Activated CD4-positive, alpha-beta T cell treated with anti-CD3 and anti-CD28 coated beads for 36 hours (primary cell): ENCODE measurements at regions of chr12 and their contacts with region 1.

Region 1: GRCh38 chr12:12376646-12377448 is 20.0 kb downstream of the BORCS5 start:
- DNase-seq: peak; percentile 27
- ATAC-seq: peak; percentile 75
- H3K4me3 Mint-ChIP-seq: no peak overlapping the region
- H3K27ac Mint-ChIP-seq: peak overlapping the region; percentile 45
- H3K4me1 Mint-ChIP-seq: peaks cover 37% of the 10 kb centered on the region
- H3K27me3 Mint-ChIP-seq: no peaks in the 10 kb centered on the region

Region 2: GRCh38 chr12:12356886-12357718 is 19.7 kb before region 1 on chr12 and contains the start of gene BORCS5:
- CTCF ChIA-PET with region 1: interaction called, 39 read pairs
- POLR2A ChIA-PET with region 1: interaction called, 6 read pairs
- intact Hi-C with region 1: no loop called
- DNase-seq: peak; percentile 99
- ATAC-seq: peak; percentile 94
- H3K4me3 Mint-ChIP-seq: peak within 1 kb of the TSS; percentile 98
- H3K27ac Mint-ChIP-seq: peak within 1 kb of the TSS; percentile 99
- H3K4me1 Mint-ChIP-seq: peaks cover 38% of the 10 kb centered on the region
- H3K27me3 Mint-ChIP-seq: no peaks in the 10 kb centered on the region
- total RNA-seq, gene BORCS5: 41.8 to 45.0 TPM

Region 3: DNA sequence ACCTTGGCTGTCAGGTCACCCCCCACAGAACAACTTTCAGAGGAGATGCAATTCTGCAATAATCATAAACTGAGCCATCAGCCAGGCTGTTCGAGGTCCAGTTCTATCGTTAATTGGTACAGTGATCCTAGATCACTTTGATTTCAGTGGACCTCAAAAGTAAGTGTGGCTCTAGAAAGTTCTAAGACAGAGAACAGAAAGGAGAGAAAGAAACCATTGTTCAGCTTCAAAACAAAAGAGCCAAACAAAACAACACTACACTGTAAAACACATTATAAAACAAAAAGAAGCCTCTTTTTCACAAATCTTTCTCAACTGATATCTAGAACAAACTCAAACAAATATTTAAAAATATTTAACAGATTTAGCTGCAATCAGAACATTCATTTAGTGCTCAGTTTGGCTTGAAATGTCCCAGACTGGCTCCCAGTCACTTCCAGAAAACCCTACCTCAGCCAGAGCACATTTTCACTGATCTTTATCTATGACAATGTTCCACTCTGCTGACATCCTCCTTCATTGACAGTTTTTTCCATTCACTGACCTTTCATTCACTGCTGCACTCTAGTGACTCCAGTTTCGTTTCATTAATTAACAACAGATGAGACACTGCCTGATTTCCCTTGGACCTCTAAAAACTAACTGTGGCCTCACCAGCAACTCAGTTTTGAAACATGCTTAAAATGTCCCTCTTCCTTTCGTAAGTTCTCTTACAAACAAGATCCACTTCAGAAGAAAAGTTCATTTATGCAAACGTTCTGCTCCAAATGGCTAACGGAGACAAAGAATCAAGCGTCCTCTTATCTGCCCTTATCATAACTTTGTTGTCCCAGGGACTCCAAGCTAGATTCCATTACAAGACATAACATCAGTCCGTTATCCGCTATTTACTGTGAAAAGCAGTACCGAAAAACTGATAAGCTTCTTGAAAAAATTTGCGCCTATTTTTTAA is 129.0 kb after region 1 on chr12:
- CTCF ChIA-PET with region 1: interaction called, 10 read pairs
- POLR2A ChIA-PET with region 1: no interaction called
- intact Hi-C with region 1: loop called (anchors 1 to 2 kb)
- DNase-seq: peak; percentile 51
- ATAC-seq: peak; percentile 79
- H3K4me3 Mint-ChIP-seq: peak overlapping the region; percentile 55
- H3K27ac Mint-ChIP-seq: peak overlapping the region; percentile 96
- H3K4me1 Mint-ChIP-seq: peaks cover 55% of the 10 kb centered on the region
- H3K27me3 Mint-ChIP-seq: no peaks in the 10 kb centered on the region

Region 4: DNA sequence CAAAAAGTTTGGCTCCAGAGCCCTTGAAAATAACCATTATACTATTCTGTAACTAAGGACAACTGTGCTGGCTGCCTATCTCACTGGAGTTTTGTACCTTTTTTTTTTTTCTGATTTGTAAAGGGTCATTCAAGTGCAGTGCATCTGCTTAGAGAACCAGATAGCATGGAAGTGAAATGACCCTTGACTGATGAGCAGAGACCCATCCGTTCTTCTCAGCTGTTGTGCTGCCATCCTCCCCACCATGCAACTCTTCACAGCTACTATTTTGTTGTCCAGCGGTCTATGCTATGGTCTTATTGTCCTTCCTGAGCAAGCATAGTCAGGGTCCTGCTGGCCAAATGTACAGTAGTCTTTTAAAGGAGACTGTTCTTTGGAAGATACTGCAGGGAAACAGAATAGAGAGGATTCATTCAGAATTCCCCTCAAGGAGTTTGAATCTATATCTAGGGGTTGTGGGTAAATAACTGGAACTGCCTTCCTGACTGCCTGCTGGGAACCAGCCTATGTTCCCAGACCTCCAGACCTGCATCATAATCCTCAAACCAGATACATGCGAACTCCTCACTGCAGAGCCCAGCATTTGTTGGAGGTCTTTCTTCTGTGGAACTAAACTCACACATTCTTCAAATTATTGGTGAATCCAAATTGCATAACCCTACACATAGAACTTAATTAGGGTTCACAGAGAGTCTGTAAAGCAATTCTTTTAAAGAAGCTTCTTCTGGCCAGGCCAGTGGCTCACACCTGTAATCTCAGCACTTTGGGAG is 278.0 kb after region 1 on chr12:
- CTCF ChIA-PET with region 1: interaction called, 29 read pairs
- POLR2A ChIA-PET with region 1: no interaction called
- intact Hi-C with region 1: loop called (anchors 1 kb)
- DNase-seq: no peak
- ATAC-seq: no peak
- H3K4me3 Mint-ChIP-seq: no peak overlapping the region
- H3K27ac Mint-ChIP-seq: no peak overlapping the region
- H3K4me1 Mint-ChIP-seq: peaks cover 7% of the 10 kb centered on the region
- H3K27me3 Mint-ChIP-seq: no peaks in the 10 kb centered on the region

Region 5: DNA sequence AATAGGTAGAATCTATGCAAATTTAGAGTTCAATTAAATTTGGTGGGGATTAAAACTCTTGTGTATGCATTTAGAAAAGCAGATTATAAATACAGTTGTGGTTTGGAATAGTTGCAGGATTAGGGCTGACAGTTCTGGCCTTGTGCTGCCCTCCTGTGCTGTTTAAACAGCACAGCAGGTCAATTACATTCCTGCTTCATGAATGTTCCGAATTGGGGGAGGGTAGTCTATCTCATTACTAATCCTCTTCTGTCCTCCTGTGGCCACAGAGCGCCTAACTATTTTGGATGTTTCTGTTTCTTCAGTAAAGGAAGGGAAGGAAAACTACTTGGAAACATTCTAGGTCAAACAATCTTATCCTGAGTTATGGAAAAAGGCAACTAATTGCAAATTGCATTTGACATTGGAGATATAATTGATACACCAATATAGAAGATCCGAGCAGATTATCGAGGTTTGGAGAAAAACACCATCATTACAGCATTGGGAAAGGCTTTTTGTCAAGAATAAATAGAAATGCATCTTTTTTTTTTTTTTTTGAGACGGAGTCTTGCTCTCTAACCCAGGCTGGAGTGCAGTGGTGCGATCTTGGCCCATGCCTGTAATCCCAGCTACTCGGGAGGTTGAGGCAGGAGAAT is 327.9 kb after region 1 on chr12:
- CTCF ChIA-PET with region 1: interaction called, 25 read pairs
- POLR2A ChIA-PET with region 1: no interaction called
- intact Hi-C with region 1: loop called (anchors 1 kb)
- DNase-seq: peak; percentile 58
- ATAC-seq: peak; percentile 80
- H3K4me3 Mint-ChIP-seq: no peak overlapping the region
- H3K27ac Mint-ChIP-seq: no peak overlapping the region
- H3K4me1 Mint-ChIP-seq: peaks cover 18% of the 10 kb centered on the region
- H3K27me3 Mint-ChIP-seq: no peaks in the 10 kb centered on the region

Region 6: DNA sequence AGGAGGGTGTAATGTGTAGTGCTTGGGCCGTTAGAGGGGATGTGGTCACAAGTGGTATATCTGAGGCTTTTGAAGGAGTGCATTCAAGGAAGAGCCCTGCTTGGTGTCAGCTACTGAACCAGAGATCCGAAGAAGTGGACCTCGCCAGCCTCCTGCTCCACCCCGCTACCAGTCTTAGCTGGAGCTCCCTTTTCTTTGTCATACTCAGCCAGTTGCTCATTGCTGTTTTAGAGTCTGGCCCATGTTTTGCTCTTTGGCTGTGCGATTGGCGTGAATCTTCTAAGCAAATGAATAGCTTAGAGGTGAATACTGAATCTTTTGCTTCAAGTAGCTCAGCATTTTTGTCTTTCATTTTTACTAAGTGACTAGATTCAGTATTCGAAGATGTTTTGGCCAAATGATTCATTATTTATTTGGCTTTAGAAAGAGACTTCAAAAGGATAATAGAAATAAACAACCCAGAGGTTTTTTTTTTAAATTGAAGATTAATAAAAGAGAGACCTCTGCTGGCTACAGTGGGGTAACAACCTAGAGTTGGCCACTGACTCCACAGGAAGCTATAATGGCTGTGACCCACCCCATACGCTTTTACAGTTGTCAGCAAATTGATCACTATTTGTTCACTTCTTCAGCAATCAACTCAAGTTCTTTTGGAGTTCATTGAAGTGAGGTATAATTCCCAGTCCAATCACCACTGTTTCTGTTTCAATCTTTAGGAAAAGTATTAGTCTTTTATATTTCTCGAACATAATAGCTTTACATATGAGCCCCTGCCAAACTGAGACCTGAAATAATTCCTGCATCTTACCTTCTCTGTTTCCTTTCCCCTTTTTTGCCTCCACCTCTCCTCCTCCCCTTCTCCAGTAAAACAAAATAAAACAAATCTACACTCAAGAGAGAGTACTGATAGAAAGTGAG is 360.2 kb after region 1 on chr12:
- CTCF ChIA-PET with region 1: interaction called, 35 read pairs
- POLR2A ChIA-PET with region 1: no interaction called
- intact Hi-C with region 1: loop called (anchors 1 to 2 kb)
- DNase-seq: peak; percentile 65
- ATAC-seq: peak; percentile 87
- H3K4me3 Mint-ChIP-seq: peak overlapping the region; percentile 32
- H3K27ac Mint-ChIP-seq: peak overlapping the region; percentile 75
- H3K4me1 Mint-ChIP-seq: peaks cover 35% of the 10 kb centered on the region
- H3K27me3 Mint-ChIP-seq: no peaks in the 10 kb centered on the region

Region 7: GRCh38 chr12:13074396-13075107 is 697.7 kb after region 1 on chr12:
- CTCF ChIA-PET with region 1: no interaction called
- POLR2A ChIA-PET with region 1: no interaction called
- intact Hi-C with region 1: no loop called
- DNase-seq: no peak
- ATAC-seq: no peak
- H3K4me3 Mint-ChIP-seq: no peak overlapping the region
- H3K27ac Mint-ChIP-seq: no peak overlapping the region
- H3K4me1 Mint-ChIP-seq: no peaks in the 10 kb centered on the region
- H3K27me3 Mint-ChIP-seq: no peaks in the 10 kb centered on the region